Right lobe of liver (tissue), 6 donors: ENCODE measurements at regions of chr5 and their contacts with region 1.

Region 1: GRCh38 chr5:169686137-169686536 is 49.1 kb downstream of the DOCK2 start:
- DNase-seq: no peak
- ATAC-seq: no peak
- H3K4me3 ChIP-seq: no peak overlapping the region
- H3K27ac ChIP-seq: no peak overlapping the region
- H3K4me1 ChIP-seq: no peaks in the 10 kb centered on the region
- H3K27me3 ChIP-seq: no peaks in the 10 kb centered on the region
- CTCF ChIP-seq: no peak
- POLR2A ChIP-seq: no peak

Region 2: DNA sequence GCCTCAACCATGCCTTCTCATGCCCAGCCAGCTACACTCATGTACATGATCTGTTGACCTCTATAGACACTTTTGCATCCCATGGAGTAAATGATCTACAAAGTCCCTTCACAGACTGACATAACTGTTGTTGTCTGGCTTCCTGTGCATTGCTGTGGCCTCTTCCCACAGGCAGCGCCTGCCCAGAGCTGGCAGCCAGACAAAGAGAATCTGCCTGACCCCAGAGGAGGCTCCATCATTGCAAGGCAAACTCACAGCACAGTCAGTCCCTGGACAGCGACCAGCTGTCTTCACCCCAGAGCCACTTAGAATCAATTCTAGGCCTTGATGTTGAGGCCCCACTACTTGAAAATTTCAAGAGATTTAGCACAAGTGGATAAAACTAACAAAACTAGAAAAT is 228.6 kb after region 1 on chr5:
- intact Hi-C with region 1: no loop called
- DNase-seq: no peak
- ATAC-seq: peak in 1 of 4 donors; percentile 29
- H3K4me3 ChIP-seq: no peak overlapping the region
- H3K27ac ChIP-seq: no peak overlapping the region
- H3K4me1 ChIP-seq: no peaks in the 10 kb centered on the region
- H3K27me3 ChIP-seq: no peaks in the 10 kb centered on the region
- CTCF ChIP-seq: no peak
- POLR2A ChIP-seq: no peak

Region 3: DNA sequence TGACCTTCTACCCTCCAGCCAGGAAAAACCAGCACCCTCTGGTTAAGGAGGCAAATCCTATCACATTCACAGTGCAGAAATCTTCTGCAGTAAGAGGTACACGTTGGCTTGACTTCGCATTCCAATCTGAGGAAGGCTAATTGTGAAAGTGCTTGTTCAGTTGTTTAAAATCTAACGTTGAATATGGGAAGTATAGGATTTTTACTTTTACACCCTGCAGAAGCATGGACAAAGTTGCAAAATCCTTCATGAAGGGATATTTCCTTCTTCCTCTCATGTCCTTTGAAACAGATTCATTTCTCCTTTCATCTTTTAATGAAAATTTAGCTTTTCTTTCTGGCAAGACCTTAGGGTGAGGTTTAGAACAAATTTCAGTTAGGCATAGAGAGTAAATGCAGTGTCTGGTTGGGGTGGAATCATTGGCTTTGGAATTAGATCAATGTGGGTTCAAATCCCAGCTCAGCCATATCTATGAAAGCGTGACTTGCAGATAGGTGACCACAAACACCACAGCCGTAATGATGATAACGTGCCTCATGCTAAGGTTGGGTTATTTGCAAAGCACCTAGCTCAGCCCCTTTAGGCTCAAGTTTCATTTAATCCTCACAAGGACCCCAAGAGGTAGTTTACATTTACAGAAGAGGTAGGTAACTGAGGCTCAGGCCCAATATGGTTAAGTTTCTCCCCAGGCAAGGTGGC is 504.4 kb after region 1 on chr5:
- intact Hi-C with region 1: loop called in 1 of 2 experiments (anchors 5 kb)
- DNase-seq: no peak
- ATAC-seq: no peak
- H3K4me3 ChIP-seq: no peak overlapping the region
- H3K27ac ChIP-seq: no peak overlapping the region
- H3K4me1 ChIP-seq: no peaks in the 10 kb centered on the region
- H3K27me3 ChIP-seq: no peaks in the 10 kb centered on the region
- CTCF ChIP-seq: no peak
- POLR2A ChIP-seq: no peak